Heart right ventricle (tissue), 16 donors: ENCODE measurements at regions of chr11 and their contacts with region 1.

Region 1: DNA sequence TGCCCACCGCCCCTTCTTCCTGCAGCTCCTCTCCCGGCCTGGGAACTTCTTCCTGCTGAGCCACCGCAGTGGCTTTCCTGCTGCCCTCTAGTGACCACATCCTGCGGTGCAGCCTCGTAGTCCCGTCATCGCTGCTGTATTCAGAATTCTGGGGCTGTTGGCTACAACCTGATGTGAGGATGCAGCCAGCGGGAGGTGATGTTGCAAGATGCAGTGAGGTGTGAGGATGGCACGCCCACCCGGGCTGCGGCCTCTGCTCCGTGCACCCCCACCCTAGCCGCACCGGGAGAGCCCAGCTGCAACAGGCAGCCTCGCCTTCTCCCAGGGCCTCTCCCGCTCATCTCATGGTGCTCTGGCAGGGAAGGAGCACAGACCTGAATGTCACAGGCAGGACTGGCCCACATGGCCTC is 10.1 kb downstream of the CHST1 start:
- DNase-seq: peak; percentile 81 to 83
- ATAC-seq: peak; percentile 28 to 63 (median 49)
- H3K4me3 ChIP-seq: no peak overlapping the region
- H3K27ac ChIP-seq: no peak overlapping the region
- H3K4me1 ChIP-seq: peaks cover 5 to 47% (median 34%) of the 10 kb centered on the region in 9 donors
- H3K27me3 ChIP-seq: peaks cover 0 to 30% (median 3%) of the 10 kb centered on the region in 7 donors
- CTCF ChIP-seq: peak; percentile 88 to 97 (median 95)

Region 2: GRCh38 chr11:45232341-45233080 is 422.8 kb before region 1 on chr11:
- intact Hi-C with region 1: no loop called
- DNase-seq: no peak
- ATAC-seq: no peak
- H3K4me3 ChIP-seq: no peak overlapping the region
- H3K27ac ChIP-seq: no peak overlapping the region
- H3K4me1 ChIP-seq: peaks cover 0 to 3% (median 0%) of the 10 kb centered on the region in 9 donors
- H3K27me3 ChIP-seq: peaks cover 0 to 5% (median 0%) of the 10 kb centered on the region in 7 donors
- CTCF ChIP-seq: no peak

Region 3: DNA sequence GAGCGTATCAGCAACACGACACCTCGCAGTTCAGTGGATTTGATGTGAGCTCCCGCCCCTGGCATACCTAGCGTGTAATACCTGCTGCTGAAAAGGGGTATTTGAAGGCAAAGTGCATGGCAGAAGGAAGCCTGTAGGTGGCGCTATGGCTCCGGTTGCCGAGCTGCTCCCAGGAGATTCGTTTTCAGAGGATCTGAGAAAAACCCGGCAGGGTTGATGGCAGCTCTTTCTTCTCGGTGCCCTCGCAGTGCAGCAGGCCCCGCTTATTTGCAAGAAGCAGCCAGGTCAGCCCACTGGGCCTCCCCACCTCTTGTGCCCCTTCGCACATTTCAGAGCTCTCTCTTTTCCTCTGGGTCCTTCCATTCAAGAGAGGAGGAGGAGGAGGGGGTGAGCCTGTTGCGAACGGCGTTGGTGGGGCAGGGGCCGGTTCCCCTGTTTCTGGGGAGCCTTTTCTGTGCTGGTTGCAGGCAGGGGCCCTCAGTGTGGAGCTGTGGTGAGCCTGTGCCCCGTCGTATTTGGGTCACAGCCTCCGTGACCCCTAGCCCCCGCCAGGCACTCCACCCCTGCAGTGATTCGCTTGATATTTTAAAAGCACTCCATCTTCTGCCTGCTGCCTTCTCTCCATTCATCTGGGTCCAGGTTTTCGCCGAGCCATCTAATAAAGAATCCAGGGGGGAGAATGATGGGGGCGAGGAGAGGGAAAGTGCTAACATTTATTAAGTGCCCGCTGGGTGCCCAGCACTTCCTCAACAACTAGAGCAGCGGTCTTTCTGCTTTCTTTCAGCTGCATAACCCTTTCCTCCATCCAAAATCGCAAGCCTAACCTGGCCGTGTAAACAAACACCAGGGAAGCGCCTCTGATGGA is 283.9 kb before region 1 on chr11:
- intact Hi-C with region 1: loop called (anchors 2 to 10 kb)
- DNase-seq: peak; percentile 48 to 61
- ATAC-seq: peak in 7 of 8 donors; percentile 44 to 79 (median 59)
- H3K4me3 ChIP-seq: peak overlapping the region in 2 of 10 donors; percentile 7 to 28
- H3K27ac ChIP-seq: no peak overlapping the region
- H3K4me1 ChIP-seq: peaks cover 0 to 15% (median 5%) of the 10 kb centered on the region in 9 donors
- H3K27me3 ChIP-seq: peaks cover 0 to 40% (median 14%) of the 10 kb centered on the region in 7 donors
- CTCF ChIP-seq: peak; percentile 83 to 94 (median 90)

Region 4: GRCh38 chr11:45411228-45411946 is 244.0 kb before region 1 on chr11:
- intact Hi-C with region 1: loop called in 7 of 10 experiments (anchors 5 to 10 kb)
- DNase-seq: no peak
- ATAC-seq: no peak
- H3K4me3 ChIP-seq: no peak overlapping the region
- H3K27ac ChIP-seq: no peak overlapping the region
- H3K4me1 ChIP-seq: no peaks in the 10 kb centered on the region
- H3K27me3 ChIP-seq: peaks cover 0 to 60% (median 31%) of the 10 kb centered on the region in 7 donors
- CTCF ChIP-seq: no peak

Region 5: DNA sequence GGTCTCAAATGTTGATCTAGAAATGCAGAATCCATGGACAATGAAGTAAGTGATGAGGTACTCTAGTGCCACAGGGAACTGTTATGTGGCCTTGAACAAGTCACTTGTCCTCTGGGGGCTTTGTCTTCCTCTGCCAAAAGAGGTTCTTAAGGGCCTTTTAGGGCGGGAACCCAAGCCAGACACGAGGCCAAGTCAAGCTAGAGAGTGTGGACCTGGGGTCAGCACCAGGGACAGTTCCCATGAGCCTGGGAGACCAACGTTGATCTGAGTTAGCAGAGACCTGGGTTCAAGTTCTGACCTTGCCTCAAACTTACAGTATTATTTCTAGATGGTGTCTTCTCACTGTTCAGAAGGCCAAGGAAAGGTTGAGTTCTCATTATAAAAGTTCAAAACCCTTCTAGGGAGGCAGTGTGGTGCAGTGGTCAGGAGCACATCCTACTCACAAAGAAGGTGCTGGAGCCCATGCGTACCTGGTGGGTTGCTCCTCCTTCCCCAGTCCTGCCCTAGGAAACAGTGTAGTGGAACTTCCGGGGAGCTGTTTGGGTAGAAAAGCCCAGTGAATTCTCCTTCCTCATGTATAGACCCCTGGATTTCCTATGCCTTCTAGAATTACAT is 111.4 kb before region 1 on chr11:
- intact Hi-C with region 1: loop called in 7 of 10 experiments (anchors 2 to 10 kb)
- DNase-seq: no peak
- ATAC-seq: no peak
- H3K4me3 ChIP-seq: no peak overlapping the region
- H3K27ac ChIP-seq: no peak overlapping the region
- H3K4me1 ChIP-seq: no peaks in the 10 kb centered on the region
- H3K27me3 ChIP-seq: peaks cover 0 to 32% (median 10%) of the 10 kb centered on the region in 7 donors
- CTCF ChIP-seq: no peak

Region 6: GRCh38 chr11:45745065-45745811 is 89.9 kb after region 1 on chr11:
- intact Hi-C with region 1: loop called in 1 of 10 experiments (anchors 10 kb)
- DNase-seq: peak; percentile 75 to 77
- ATAC-seq: peak; percentile 82 to 95 (median 92)
- H3K4me3 ChIP-seq: no peak overlapping the region
- H3K27ac ChIP-seq: peak overlapping the region in 9 of 10 donors; percentile 28 to 74 (median 57)
- H3K4me1 ChIP-seq: peaks cover 0 to 31% (median 8%) of the 10 kb centered on the region in 9 donors
- H3K27me3 ChIP-seq: no peaks in the 10 kb centered on the region
- CTCF ChIP-seq: no peak

Region 7: GRCh38 chr11:45791485-45791884 is 136.1 kb after region 1 on chr11:
- intact Hi-C with region 1: no loop called
- DNase-seq: no peak
- ATAC-seq: no peak
- H3K4me3 ChIP-seq: no peak overlapping the region
- H3K27ac ChIP-seq: no peak overlapping the region
- H3K4me1 ChIP-seq: no peaks in the 10 kb centered on the region
- H3K27me3 ChIP-seq: peaks cover 0 to 20% (median 6%) of the 10 kb centered on the region in 7 donors
- CTCF ChIP-seq: no peak